Activated T-helper 2 cell treated with anti-CD3 and anti-CD28 coated beads, Interferon-gamma antibody, Interleukin-2, Interleukin-4, amounts not matched to agents 10 μg/mL and 5 μg/mL and 100 μg/mL, durations not matched to agents 14 hours and 24 hours and 36 hours (primary cell): ENCODE measurements at regions of chr3 and their contacts with region 1.

Region 1: DNA sequence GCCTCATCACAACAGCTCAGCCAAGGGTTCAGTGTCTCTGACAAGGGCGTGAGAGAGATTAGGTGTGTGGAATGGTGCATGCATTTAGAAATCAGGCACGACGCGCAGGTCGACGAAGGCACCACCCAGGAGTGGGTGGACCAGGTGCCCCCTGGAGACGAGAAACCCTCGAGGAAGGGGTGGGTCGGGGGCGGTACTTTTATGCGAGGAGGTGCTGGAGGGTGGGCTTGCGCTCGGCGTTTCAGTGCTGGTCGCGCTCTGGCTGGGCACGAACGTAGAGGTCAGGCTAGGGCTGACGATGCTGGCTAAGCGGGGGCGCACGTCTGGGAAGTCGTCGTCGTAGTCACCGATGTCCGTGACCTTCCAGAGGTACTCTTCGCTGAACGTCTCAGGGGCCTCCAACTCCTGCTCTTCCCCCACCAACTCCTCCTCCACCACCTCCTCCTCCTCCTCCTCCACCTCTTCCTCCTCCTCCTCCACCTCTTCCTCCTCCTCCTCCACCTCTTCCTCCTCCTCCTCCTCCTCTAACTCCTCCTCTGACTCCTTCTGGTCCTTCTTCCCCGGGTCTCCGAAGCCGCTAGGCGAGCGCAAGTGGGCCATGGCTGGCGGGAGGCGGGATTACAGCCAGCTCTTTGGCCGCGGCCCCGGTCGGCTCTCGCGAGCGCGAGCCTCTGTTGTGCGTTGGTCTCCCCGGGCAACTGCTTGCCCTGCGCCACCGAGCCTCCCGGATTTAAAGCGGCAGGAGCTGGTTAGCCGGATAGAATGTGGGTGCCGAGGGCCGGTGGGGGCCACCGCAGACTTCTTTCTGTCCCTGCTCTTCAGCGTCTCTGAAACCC is at the start of gene ERICH6:
- DNase-seq: peak; percentile 83
- H3K4me3 Mint-ChIP-seq: peak within 1 kb of the TSS; percentile 94
- H3K27ac Mint-ChIP-seq: peak within 1 kb of the TSS; percentile 97
- H3K4me1 Mint-ChIP-seq: peaks cover 25% of the 10 kb centered on the region
- H3K27me3 Mint-ChIP-seq: peaks cover 7% of the 10 kb centered on the region
- total RNA-seq, gene ERICH6: 0.21 and 0.39 TPM in 2 replicates

Region 2: DNA sequence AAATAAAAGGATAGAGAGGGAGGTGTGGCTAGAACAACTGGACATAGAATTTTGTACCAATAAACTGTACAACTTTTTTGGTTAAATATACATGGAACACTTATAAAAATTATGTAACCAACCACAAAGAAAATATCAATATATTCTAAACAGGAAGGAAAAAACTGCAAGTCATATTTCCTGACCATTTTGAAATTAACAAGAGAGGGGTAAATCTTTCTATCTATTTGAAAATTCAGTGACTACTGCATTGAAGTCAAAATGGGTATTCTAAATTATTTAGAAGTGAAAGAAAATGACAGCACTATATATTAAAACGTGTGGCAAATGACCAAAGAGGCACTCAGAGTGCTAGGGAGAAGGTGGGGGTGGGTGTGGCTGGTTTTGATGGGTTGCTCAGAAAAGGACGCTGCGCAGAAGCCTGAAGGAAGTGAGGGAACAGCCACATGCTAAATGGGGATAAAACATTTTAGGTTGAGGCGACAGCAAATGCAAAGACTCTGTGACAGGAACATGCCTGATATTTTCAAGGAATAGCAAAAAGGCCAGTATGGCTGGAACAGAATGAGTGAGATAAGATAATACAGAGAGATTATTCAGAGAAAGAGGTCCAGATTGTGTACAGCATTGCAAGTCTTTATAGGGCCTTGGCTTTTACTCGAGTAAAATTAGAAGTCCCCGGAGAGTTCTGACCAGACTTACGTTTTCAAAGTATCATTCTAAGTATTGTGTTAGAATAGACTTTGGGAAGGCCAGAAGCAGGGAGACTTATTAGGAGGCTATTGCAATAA is 40.9 kb before region 1 on chr3:
- intact Hi-C with region 1: loop called (anchors 5 kb)
- DNase-seq: no peak
- H3K4me3 Mint-ChIP-seq: no peak overlapping the region
- H3K27ac Mint-ChIP-seq: no peak overlapping the region
- H3K4me1 Mint-ChIP-seq: peaks cover 26% of the 10 kb centered on the region
- H3K27me3 Mint-ChIP-seq: peaks cover 26% of the 10 kb centered on the region

Region 3: GRCh38 chr3:150681057-150681456 is 22.5 kb before region 1 on chr3:
- intact Hi-C with region 1: loop called (anchors 1 kb)
- DNase-seq: no peak
- H3K4me3 Mint-ChIP-seq: peak overlapping the region; percentile 15
- H3K27ac Mint-ChIP-seq: peak overlapping the region; percentile 48
- H3K4me1 Mint-ChIP-seq: peaks cover 21% of the 10 kb centered on the region
- H3K27me3 Mint-ChIP-seq: peaks cover 4% of the 10 kb centered on the region